Motor neuron (in vitro differentiated cells): ENCODE measurements at regions of chr5 and their contacts with region 1.

Region 1: GRCh38 chr5:58460732-58461286 is 923 bp upstream of the PLK2 start:
- ATAC-seq: peak; percentile 36 to 66 (median 63)
- H3K4me3 ChIP-seq: peak overlapping the region; percentile 50 to 91 (median 69)
- H3K27ac ChIP-seq: peak overlapping the region; percentile 62 to 71
- H3K4me1 ChIP-seq: peaks cover 6 to 13% of the 10 kb centered on the region in 2 donors

Region 2: GRCh38 chr5:57298295-57298984 is 1162.4 kb before region 1 on chr5:
- in situ Hi-C with region 1: loop called (anchors 5 to 25 kb)
- ATAC-seq: peak; percentile 74 to 90 (median 78)
- H3K4me3 ChIP-seq: no peak overlapping the region
- H3K27ac ChIP-seq: no peak overlapping the region
- H3K4me1 ChIP-seq: peaks cover 0 to 5% of the 10 kb centered on the region in 2 donors

Region 3: DNA sequence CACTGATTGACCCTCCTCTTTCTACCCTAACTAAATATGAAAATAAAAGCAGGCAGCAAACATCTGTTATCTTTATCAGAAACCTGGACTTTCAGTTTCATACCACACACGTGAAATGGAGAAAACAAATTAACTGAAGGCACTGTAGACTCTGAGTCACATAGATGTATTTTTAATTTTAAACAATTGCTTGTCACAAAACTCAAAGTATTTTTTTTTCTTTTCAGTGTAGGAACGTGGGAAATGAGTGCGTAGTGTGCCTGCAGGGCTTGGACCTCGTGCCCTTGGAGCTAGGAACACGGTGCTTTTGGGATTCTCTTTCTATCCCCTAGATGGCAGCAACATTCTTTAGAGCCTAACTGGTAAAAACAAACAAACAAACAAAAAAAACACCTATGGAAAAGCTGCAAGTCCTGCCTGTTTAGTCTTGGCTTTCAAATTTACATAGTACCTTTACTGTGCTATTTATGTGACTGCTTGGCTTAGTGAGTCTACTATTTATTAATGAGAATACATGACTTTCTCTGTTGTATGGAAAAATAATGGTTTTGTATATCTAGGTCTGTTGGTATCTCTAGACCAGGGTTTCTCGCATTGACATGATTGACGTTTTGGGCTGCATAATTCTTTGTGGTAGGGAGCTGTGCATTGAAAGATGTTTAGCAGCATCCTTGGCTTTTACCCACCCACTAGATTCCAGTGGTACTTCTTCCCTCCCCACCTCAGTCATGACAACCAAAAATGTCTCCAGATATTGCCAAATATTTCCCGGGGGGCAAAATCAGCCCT is 961.4 kb before region 1 on chr5:
- in situ Hi-C with region 1: loop called in 5 of 9 experiments (anchors 25 kb)
- ATAC-seq: peak in 7 of 8 experiments; percentile 20 to 68 (median 52)
- H3K4me3 ChIP-seq: no peak overlapping the region
- H3K27ac ChIP-seq: no peak overlapping the region
- H3K4me1 ChIP-seq: peaks cover 2 to 10% of the 10 kb centered on the region in 2 donors

Region 4: GRCh38 chr5:57779383-57780223 is 681.2 kb before region 1 on chr5:
- in situ Hi-C with region 1: loop called in 6 of 9 experiments (anchors 10 to 25 kb)
- ATAC-seq: peak; percentile 58 to 96 (median 79)
- H3K4me3 ChIP-seq: no peak overlapping the region
- H3K27ac ChIP-seq: no peak overlapping the region
- H3K4me1 ChIP-seq: no peaks in the 10 kb centered on the region

Region 5: DNA sequence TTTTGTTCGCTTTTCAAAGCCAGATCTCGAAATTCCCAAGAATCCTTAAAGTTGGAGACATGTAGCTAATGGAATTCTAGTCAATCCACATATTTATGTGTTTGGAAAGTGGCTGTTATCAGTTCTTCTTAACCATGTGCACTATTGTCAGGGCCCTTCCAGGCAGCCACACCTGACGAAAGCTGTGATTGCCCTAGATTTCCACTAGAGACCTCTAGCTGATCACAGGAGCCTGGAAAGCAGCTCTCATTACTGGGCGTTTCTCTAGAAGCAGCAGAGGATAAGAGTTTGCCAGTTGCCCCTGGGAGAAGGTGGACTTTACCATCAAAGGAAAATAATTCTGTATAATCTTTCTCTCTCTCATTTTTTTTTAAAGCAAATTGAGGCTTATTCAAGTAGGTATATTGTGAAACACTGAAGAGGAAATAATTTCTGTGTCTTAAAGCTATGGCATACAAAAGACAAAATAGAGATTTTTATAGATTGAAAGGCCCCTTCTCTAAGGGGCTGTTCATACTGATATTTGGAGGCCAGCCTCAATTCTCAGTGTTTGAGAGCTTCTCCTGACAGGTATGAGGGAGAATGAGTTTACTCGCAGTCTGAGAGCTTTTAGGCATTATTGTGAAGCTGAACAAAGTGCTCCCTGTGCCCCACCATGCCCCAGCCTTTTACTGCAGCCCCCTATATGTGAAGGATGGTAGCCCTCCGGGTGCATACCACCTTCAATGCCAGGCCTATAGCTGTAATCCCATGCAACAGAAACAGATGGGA is 572.8 kb before region 1 on chr5:
- in situ Hi-C with region 1: loop called in 6 of 9 experiments (anchors 10 to 25 kb)
- ATAC-seq: peak; percentile 90 to 100 (median 96)
- H3K4me3 ChIP-seq: no peak overlapping the region
- H3K27ac ChIP-seq: no peak overlapping the region
- H3K4me1 ChIP-seq: no peaks in the 10 kb centered on the region